Naive thymus-derived CD4-positive, alpha-beta T cell (primary cell): ENCODE measurements at regions of chr10 and their contacts with region 1.

Region 1: GRCh38 chr10:102114861-102115618 is 5.1 kb downstream of the LDB1 start:
- DNase-seq: peak; percentile 61 to 83 (median 70)
- ATAC-seq: peak; percentile 86
- H3K4me3 ChIP-seq: peak overlapping the region; percentile 77
- H3K4me3 Mint-ChIP-seq: peak overlapping the region; percentile 84 to 97 (median 92)
- H3K27ac ChIP-seq: peak overlapping the region; percentile 97
- H3K27ac Mint-ChIP-seq: peak overlapping the region; percentile 80 to 98 (median 92)
- H3K4me1 ChIP-seq: peaks cover 49 to 58% of the 10 kb centered on the region in 2 donors
- H3K4me1 Mint-ChIP-seq: peaks cover 54 to 76% (median 67%) of the 10 kb centered on the region in 7 donors
- H3K27me3 ChIP-seq: no peaks in the 10 kb centered on the region
- H3K27me3 Mint-ChIP-seq: no peaks in the 10 kb centered on the region

Region 2: GRCh38 chr10:101830322-101831168 is 284.5 kb before region 1 on chr10:
- CTCF ChIA-PET with region 1: no interaction called
- POLR2A ChIA-PET with region 1: interaction called, 3 read pairs
- intact Hi-C with region 1: loop called (anchors 1 to 2 kb)
- DNase-seq: peak; percentile 89 to 98 (median 95)
- ATAC-seq: peak; percentile 90
- H3K4me3 ChIP-seq: peak overlapping the region; percentile 66
- H3K4me3 Mint-ChIP-seq: peak overlapping the region; percentile 79 to 94 (median 88)
- H3K27ac ChIP-seq: peak overlapping the region; percentile 85
- H3K27ac Mint-ChIP-seq: peak overlapping the region; percentile 94 to 100 (median 99)
- H3K4me1 ChIP-seq: peaks cover 22 to 53% of the 10 kb centered on the region in 2 donors
- H3K4me1 Mint-ChIP-seq: peaks cover 41 to 59% (median 53%) of the 10 kb centered on the region in 7 donors
- H3K27me3 ChIP-seq: no peaks in the 10 kb centered on the region
- H3K27me3 Mint-ChIP-seq: peaks cover 0 to 4% (median 0%) of the 10 kb centered on the region in 5 donors

Region 3: GRCh38 chr10:102064868-102065560 is 50.0 kb before region 1 on chr10 and contains the start of gene HPS6:
- CTCF ChIA-PET with region 1: interaction called, 3 read pairs
- POLR2A ChIA-PET with region 1: interaction called, 5 read pairs
- intact Hi-C with region 1: loop called (anchors 1 to 2 kb)
- DNase-seq: peak; percentile 73 to 94 (median 81)
- ATAC-seq: peak; percentile 98
- H3K4me3 ChIP-seq: peak within 1 kb of the TSS; percentile 82
- H3K4me3 Mint-ChIP-seq: peak within 1 kb of the TSS; percentile 79 to 91 (median 89)
- H3K27ac ChIP-seq: peak within 1 kb of the TSS; percentile 93
- H3K27ac Mint-ChIP-seq: peak within 1 kb of the TSS; percentile 85 to 97 (median 93)
- H3K4me1 ChIP-seq: peaks cover 14 to 23% of the 10 kb centered on the region in 2 donors
- H3K4me1 Mint-ChIP-seq: peaks cover 23 to 43% (median 36%) of the 10 kb centered on the region in 7 donors
- H3K27me3 ChIP-seq: no peaks in the 10 kb centered on the region
- H3K27me3 Mint-ChIP-seq: no peaks in the 10 kb centered on the region
- total RNA-seq, gene HPS6: 12.1 to 24.2 (median 20.9) TPM

Region 4: GRCh38 chr10:102101152-102101551 is 13.9 kb before region 1 on chr10:
- CTCF ChIA-PET with region 1: interaction called, 3 read pairs
- POLR2A ChIA-PET with region 1: interaction called, 19 read pairs
- intact Hi-C with region 1: no loop called
- DNase-seq: no peak
- ATAC-seq: no peak
- H3K4me3 ChIP-seq: no peak overlapping the region
- H3K4me3 Mint-ChIP-seq: no peak overlapping the region
- H3K27ac ChIP-seq: no peak overlapping the region
- H3K27ac Mint-ChIP-seq: no peak overlapping the region
- H3K4me1 ChIP-seq: no peaks in the 10 kb centered on the region
- H3K4me1 Mint-ChIP-seq: peaks cover 9 to 18% (median 14%) of the 10 kb centered on the region in 7 donors
- H3K27me3 ChIP-seq: no peaks in the 10 kb centered on the region
- H3K27me3 Mint-ChIP-seq: no peaks in the 10 kb centered on the region